Activated CD4-positive, alpha-beta T cell treated with anti-CD3 and anti-CD28 coated beads for 36 hours (primary cell): ENCODE measurements at regions of chr3 and their contacts with region 1.

Region 1: GRCh38 chr3:138834359-138835212 is at the start of gene PIK3CB:
- DNase-seq: peak; percentile 93
- ATAC-seq: peak; percentile 91
- H3K4me3 Mint-ChIP-seq: peak within 1 kb of the TSS; percentile 94
- H3K27ac Mint-ChIP-seq: peak within 1 kb of the TSS; percentile 100
- H3K4me1 Mint-ChIP-seq: peaks cover 32% of the 10 kb centered on the region
- H3K27me3 Mint-ChIP-seq: no peaks in the 10 kb centered on the region
- total RNA-seq, gene PIK3CB: 16.2 to 19.1 TPM

Region 2: DNA sequence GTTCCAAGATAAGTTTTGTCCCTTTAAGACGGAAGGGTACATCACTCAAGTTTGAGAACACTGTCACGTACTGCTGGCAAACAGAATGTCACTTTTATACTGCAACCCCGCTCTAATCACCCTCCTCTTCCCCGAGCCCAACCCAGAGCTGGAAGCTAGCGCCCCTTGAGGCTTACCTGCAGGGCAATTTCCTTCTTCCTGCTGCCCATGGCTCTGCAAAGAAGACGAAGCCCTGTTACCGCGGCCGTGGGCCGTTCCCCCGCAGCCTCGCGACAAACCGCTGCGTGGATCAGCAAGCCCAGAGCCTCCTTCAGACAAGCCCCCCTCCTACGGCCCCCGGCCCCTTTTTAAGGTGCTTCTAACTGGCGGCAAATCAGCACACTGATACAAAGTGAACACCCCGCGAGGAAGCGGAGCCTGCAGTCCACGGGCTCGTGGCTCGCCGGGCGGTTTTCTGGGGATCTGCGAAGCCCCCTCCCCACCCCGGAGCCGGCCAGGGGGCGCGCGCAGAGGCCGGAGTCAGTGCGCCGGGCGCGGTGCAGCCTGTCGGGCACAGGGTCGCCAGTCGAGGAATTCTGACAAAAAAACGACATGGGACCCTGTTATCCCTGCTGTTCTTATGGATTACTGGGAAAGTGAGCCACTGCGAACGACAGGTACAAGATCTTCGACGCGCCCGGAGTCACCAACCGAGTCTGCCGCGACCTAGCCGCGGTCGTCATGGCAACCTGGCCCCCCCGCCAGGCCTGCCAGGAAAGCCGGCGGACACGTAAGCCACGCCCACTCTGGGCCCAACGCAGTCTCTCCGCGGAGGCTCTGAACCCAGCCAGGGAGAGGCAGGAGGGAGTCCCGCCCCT is 505.2 kb before region 1 on chr3 and contains the start of gene NME9:
- CTCF ChIA-PET with region 1: no interaction called
- POLR2A ChIA-PET with region 1: no interaction called
- intact Hi-C with region 1: loop called in 1 of 2 experiments (anchors 1 kb)
- DNase-seq: peak; percentile 93
- ATAC-seq: peak; percentile 90
- H3K4me3 Mint-ChIP-seq: peak within 1 kb of the TSS; percentile 76
- H3K27ac Mint-ChIP-seq: peak within 1 kb of the TSS; percentile 84
- H3K4me1 Mint-ChIP-seq: peaks cover 30% of the 10 kb centered on the region
- H3K27me3 Mint-ChIP-seq: no peaks in the 10 kb centered on the region
- total RNA-seq, gene NME9: 0.46 to 0.65 TPM

Region 3: GRCh38 chr3:138686771-138687221 is 147.8 kb before region 1 on chr3:
- CTCF ChIA-PET with region 1: no interaction called
- POLR2A ChIA-PET with region 1: no interaction called
- intact Hi-C with region 1: loop called in 1 of 2 experiments (anchors 5 kb)
- DNase-seq: no peak
- ATAC-seq: peak; percentile 69
- H3K4me3 Mint-ChIP-seq: no peak overlapping the region
- H3K27ac Mint-ChIP-seq: peak overlapping the region; percentile 77
- H3K4me1 Mint-ChIP-seq: peaks cover 12% of the 10 kb centered on the region
- H3K27me3 Mint-ChIP-seq: no peaks in the 10 kb centered on the region

Region 4: DNA sequence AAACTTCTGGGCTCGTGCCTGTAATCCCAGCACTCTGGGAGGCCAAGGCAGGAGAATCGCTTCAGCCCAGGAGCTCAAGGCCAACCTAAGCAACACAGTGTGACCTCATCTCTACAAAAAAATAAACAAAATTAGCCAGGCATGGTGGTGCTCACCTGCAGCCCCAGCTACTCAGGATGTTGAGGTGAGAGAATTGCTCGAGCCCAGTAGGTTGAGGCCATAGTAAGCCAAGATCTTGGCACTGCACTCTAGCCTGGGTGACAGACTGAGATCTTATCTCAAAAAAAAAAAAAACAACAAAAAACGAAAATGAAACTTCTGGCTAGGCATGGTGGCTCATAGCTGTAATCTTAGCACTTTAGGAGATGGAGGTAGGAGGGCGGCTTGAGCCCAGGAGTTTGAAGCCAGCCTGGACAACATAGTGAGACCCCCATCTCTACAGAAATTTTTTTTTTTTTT is 53.5 kb before region 1 on chr3:
- CTCF ChIA-PET with region 1: interaction called, 3 read pairs
- POLR2A ChIA-PET with region 1: no interaction called
- intact Hi-C with region 1: loop called (anchors 2 kb)
- DNase-seq: peak; percentile 47
- ATAC-seq: peak; percentile 97
- H3K4me3 Mint-ChIP-seq: no peak overlapping the region
- H3K27ac Mint-ChIP-seq: peak overlapping the region; percentile 58
- H3K4me1 Mint-ChIP-seq: peaks cover 29% of the 10 kb centered on the region
- H3K27me3 Mint-ChIP-seq: no peaks in the 10 kb centered on the region

Region 5: DNA sequence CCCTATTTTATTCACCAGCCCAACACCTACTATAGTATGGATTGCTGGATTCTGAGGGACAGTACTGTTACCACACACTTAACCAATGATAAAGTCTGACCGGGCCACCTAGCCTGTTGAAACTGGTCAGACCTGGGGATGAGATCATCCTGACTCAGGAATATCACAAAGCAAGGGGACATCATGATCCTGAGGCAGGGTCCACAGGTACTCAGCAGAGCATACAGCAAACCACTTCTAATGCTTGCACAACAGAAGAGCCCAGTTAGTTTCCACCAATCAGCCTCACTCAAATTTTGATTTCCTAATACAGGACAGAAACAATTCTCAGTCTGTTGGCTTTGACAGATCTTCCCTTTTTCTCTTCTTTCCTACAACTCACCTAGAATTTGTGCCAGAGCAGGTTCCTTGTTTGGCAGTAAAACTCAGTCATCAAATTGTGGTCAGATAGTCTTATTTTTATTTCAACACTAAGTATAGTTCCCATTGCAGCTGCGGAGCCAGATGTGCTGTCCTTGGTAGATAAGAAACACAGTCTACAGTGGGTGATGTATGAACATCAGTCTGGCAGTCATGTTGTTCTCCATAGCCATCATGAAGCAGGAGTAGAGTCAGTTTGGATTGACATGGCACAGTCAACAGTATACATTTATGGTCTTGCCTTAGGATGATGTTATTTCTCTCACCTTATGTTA is 300.2 kb after region 1 on chr3:
- CTCF ChIA-PET with region 1: no interaction called
- POLR2A ChIA-PET with region 1: no interaction called
- intact Hi-C with region 1: no loop called
- DNase-seq: no peak
- ATAC-seq: no peak
- H3K4me3 Mint-ChIP-seq: no peak overlapping the region
- H3K27ac Mint-ChIP-seq: no peak overlapping the region
- H3K4me1 Mint-ChIP-seq: no peaks in the 10 kb centered on the region
- H3K27me3 Mint-ChIP-seq: peaks cover 2% of the 10 kb centered on the region

Region 6: GRCh38 chr3:139389458-139390209 is 555.0 kb after region 1 on chr3 and contains the start of gene COPB2:
- CTCF ChIA-PET with region 1: no interaction called
- POLR2A ChIA-PET with region 1: no interaction called
- intact Hi-C with region 1: loop called in 1 of 2 experiments (anchors 10 kb)
- DNase-seq: peak; percentile 98
- ATAC-seq: peak; percentile 93
- H3K4me3 Mint-ChIP-seq: peak within 1 kb of the TSS; percentile 96
- H3K27ac Mint-ChIP-seq: peak within 1 kb of the TSS; percentile 97
- H3K4me1 Mint-ChIP-seq: peaks cover 38% of the 10 kb centered on the region
- H3K27me3 Mint-ChIP-seq: no peaks in the 10 kb centered on the region
- total RNA-seq, gene COPB2: 90.9 to 99.2 TPM